Psoas muscle (tissue), 8 donors: ENCODE measurements at regions of chr1 and their contacts with region 1.

Region 1: GRCh38 chr1:70656361-70656760 is 245.3 kb downstream of the CTH start:
- DNase-seq: no peak
- ATAC-seq: no peak
- H3K4me3 ChIP-seq: no peak overlapping the region
- H3K27ac ChIP-seq: no peak overlapping the region
- H3K4me1 ChIP-seq: no peaks in the 10 kb centered on the region
- H3K27me3 ChIP-seq: no peaks in the 10 kb centered on the region
- CTCF ChIP-seq: no peak

Region 2: DNA sequence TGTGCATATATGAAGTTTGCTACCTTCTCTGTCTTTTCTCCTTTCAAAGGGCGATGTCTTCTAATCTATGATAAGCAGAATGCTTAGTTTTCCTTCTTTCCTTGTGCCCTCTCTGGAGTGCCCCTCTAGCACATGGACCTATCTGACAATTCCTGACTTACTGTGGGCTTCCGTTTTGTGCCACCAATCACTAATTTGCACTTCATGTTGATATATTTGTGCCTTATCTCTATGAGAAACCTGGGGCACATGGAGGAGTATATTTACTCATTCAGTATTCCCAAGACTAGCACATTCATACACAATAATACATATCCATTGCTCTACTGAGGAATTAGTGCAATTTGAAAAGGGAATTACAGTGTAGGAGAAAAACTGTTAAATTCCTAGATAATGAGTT is 47.5 kb before region 1 on chr1:
- intact Hi-C with region 1: no loop called
- DNase-seq: no peak
- ATAC-seq: no peak
- H3K4me3 ChIP-seq: no peak overlapping the region
- H3K27ac ChIP-seq: no peak overlapping the region
- H3K4me1 ChIP-seq: no peaks in the 10 kb centered on the region
- H3K27me3 ChIP-seq: no peaks in the 10 kb centered on the region
- CTCF ChIP-seq: no peak

Region 3: DNA sequence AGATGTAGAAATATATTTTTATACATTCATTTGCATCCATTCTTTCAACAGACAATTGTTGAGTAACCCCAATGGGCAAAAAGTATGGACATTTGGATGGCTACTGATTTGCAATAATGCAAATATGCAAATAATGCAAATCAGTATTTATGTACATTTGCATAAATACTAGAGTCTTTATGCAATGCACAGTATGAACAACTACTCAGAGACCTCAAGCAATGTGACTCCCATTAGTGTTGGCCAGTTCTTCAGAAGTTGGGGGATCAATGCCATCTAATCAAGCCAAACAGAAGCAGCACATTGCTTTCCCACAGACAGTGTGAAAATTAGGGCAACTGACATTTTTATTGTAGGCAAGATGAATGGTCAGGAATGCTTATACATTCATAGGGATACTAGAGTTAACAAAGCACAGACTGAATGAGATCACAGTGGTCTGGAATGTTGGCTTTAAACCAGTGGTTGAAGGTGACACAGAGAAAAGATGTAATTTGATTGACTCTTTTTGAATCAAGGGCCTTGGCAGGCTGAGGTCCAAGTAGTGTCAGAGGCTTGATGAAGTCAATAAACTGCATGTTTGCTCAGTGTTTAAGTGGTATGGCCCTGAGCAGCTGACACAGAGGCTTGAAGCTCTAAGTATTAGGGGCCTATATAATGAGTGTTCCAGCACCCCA is 11.3 kb after region 1 on chr1:
- intact Hi-C with region 1: loop called in 1 of 2 experiments (anchors 2 kb)
- DNase-seq: no peak
- ATAC-seq: no peak
- H3K4me3 ChIP-seq: no peak overlapping the region
- H3K27ac ChIP-seq: no peak overlapping the region
- H3K4me1 ChIP-seq: no peaks in the 10 kb centered on the region
- H3K27me3 ChIP-seq: no peaks in the 10 kb centered on the region
- CTCF ChIP-seq: no peak

Region 4: GRCh38 chr1:70745199-70745598 is 88.8 kb after region 1 on chr1:
- intact Hi-C with region 1: no loop called
- DNase-seq: no peak
- ATAC-seq: no peak
- H3K4me3 ChIP-seq: no peak overlapping the region
- H3K27ac ChIP-seq: no peak overlapping the region
- H3K4me1 ChIP-seq: no peaks in the 10 kb centered on the region
- H3K27me3 ChIP-seq: no peaks in the 10 kb centered on the region
- CTCF ChIP-seq: no peak